Activated B cell treated with CpG ODN at 0.5 μM for 24 hours (primary cell): ENCODE measurements at regions of chr9 and their contacts with region 1.

Region 1: DNA sequence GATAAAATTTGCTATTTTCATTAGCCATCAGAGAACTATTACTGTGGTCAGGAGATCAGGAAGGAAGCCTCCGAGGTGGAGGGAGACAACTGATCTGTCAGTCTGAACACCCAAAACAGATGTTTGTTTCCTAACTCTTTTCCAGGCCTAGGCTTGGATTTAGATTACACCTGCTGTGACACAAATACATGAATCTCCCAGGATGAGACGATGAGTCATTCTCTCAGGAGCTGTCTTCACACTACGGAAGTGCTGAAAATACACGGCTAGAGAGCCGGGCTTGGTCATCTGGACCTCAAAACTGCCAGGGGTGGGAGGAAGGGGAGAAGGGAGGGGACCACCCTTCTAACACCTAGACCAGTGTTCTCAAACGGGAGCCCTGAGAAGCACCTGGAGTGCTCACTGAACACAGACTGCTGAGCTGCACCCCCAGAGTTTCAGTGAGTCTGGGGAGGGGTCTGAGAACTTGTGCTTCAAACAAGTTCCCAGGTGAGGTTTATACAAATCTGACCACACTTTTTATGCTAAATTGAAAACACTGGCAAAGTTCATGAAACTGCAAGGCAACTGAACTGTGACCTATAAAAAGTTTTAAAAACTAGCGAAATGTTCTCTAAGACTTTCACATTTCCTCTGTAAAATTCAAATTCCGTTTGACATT is 80.3 kb upstream of the EQTN start:
- DNase-seq: no peak
- ATAC-seq: peak; percentile 15
- H3K4me3 Mint-ChIP-seq: peak overlapping the region; percentile 68
- H3K27ac Mint-ChIP-seq: peak overlapping the region; percentile 88
- H3K4me1 Mint-ChIP-seq: peaks cover 72% of the 10 kb centered on the region
- H3K27me3 Mint-ChIP-seq: no peaks in the 10 kb centered on the region
- CTCF ChIP-seq: no peak

Region 2: DNA sequence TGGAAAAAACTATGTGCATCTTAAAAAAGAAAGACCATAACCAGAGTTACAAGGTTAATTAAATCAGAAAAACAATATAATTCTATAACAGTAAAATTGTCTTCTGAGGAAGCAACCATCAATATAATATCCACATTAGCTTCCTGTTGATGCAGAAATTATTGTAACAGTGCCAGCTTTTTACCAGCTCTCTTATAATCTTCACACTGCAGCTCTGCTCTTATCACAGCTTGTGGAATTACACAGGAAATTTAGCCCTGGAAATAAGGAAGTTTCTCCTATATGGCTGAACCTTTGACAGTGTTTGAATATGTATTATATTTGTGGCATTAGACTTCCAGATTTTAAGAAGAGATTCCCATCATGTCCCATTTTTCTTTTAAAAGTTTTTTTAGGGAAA is 317.4 kb before region 1 on chr9:
- CTCF ChIA-PET with region 1: no interaction called
- POLR2A ChIA-PET with region 1: no interaction called
- intact Hi-C with region 1: no loop called
- DNase-seq: no peak
- ATAC-seq: no peak
- H3K4me3 Mint-ChIP-seq: no peak overlapping the region
- H3K27ac Mint-ChIP-seq: no peak overlapping the region
- H3K4me1 Mint-ChIP-seq: no peaks in the 10 kb centered on the region
- H3K27me3 Mint-ChIP-seq: no peaks in the 10 kb centered on the region
- CTCF ChIP-seq: no peak

Region 3: GRCh38 chr9:27261517-27262211 is 115.6 kb before region 1 on chr9:
- CTCF ChIA-PET with region 1: no interaction called
- POLR2A ChIA-PET with region 1: no interaction called
- intact Hi-C with region 1: no loop called
- DNase-seq: no peak
- ATAC-seq: no peak
- H3K4me3 Mint-ChIP-seq: no peak overlapping the region
- H3K27ac Mint-ChIP-seq: no peak overlapping the region
- H3K4me1 Mint-ChIP-seq: no peaks in the 10 kb centered on the region
- H3K27me3 Mint-ChIP-seq: no peaks in the 10 kb centered on the region
- CTCF ChIP-seq: no peak

Region 4: GRCh38 chr9:27394154-27394825 is 17.0 kb after region 1 on chr9:
- CTCF ChIA-PET with region 1: no interaction called
- POLR2A ChIA-PET with region 1: interaction called, 3 read pairs
- intact Hi-C with region 1: loop called (anchors 2 kb)
- DNase-seq: no peak
- ATAC-seq: no peak
- H3K4me3 Mint-ChIP-seq: no peak overlapping the region
- H3K27ac Mint-ChIP-seq: peak overlapping the region; percentile 80
- H3K4me1 Mint-ChIP-seq: peaks cover 69% of the 10 kb centered on the region
- H3K27me3 Mint-ChIP-seq: no peaks in the 10 kb centered on the region
- CTCF ChIP-seq: no peak

Region 5: DNA sequence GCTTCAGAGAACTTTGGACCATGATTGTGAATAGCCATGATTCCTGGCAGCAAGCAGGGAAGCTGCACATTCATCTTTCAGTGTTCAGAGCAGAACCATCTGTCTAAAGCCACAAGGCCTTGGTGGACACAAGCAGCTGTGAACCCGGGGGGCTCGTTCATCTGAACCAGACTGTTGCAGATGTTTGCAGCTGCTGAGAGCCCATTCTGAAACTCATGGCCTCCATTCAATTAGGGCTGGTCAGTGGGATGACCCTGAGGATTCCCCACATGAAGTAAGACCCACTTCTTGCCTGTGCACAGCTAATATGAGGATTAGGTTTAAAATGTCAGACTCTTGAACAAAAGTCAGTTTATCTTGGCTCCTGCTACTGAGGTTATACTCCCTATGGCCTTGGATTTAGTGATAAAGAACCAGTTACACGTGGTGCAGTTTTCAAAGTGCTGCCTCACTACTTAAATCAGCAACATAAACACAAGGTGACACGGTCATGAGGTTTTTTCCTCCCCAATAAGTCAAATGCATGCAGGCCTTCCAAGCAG is 37.0 kb after region 1 on chr9:
- CTCF ChIA-PET with region 1: no interaction called
- POLR2A ChIA-PET with region 1: interaction called, 21 read pairs
- intact Hi-C with region 1: loop called (anchors 2 kb)
- DNase-seq: no peak
- ATAC-seq: no peak
- H3K4me3 Mint-ChIP-seq: no peak overlapping the region
- H3K27ac Mint-ChIP-seq: no peak overlapping the region
- H3K4me1 Mint-ChIP-seq: peaks cover 32% of the 10 kb centered on the region
- H3K27me3 Mint-ChIP-seq: no peaks in the 10 kb centered on the region
- CTCF ChIP-seq: no peak

Region 6: DNA sequence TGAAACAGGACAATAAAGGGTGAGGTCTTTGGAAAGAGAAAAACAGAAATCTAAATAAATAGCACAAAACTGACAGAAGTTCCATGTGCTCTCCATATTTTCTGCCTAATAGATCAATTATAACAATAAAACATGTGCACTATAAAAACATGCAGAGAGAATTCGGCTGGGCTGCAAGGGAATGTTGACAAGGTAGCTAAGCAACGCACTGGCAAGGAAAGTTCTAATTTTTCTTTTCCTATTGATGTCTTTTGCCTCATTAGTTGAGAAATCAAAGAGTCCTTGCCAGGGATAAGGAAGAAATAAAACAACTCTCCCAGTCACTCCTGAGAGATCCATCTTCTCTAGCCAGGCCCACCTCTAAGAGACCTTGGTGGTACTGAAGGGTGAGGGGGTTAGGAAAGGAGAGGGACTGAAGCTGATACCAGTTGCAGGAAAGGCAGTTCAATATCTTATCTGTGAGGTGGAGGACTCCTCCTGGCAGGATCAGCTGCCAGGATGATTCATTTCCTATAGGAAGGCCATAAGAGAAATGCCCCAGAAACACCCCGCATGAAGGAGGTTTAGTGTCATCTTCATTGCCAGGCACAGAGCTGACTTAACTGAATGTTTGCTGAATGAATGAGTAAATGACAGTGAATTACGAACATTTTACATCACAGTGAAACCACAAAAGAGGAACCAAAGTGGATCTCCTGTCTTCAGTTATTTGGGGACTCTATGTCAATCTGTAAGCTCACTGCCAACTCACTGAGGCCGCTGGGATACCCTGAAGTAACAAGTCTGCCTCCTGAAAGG is 83.1 kb after region 1 on chr9:
- CTCF ChIA-PET with region 1: no interaction called
- POLR2A ChIA-PET with region 1: interaction called, 3 read pairs
- intact Hi-C with region 1: loop called (anchors 1 kb)
- DNase-seq: no peak
- ATAC-seq: peak; percentile 93
- H3K4me3 Mint-ChIP-seq: peak overlapping the region; percentile 66
- H3K27ac Mint-ChIP-seq: peak overlapping the region; percentile 86
- H3K4me1 Mint-ChIP-seq: peaks cover 61% of the 10 kb centered on the region
- H3K27me3 Mint-ChIP-seq: no peaks in the 10 kb centered on the region
- CTCF ChIP-seq: no peak

Region 7: DNA sequence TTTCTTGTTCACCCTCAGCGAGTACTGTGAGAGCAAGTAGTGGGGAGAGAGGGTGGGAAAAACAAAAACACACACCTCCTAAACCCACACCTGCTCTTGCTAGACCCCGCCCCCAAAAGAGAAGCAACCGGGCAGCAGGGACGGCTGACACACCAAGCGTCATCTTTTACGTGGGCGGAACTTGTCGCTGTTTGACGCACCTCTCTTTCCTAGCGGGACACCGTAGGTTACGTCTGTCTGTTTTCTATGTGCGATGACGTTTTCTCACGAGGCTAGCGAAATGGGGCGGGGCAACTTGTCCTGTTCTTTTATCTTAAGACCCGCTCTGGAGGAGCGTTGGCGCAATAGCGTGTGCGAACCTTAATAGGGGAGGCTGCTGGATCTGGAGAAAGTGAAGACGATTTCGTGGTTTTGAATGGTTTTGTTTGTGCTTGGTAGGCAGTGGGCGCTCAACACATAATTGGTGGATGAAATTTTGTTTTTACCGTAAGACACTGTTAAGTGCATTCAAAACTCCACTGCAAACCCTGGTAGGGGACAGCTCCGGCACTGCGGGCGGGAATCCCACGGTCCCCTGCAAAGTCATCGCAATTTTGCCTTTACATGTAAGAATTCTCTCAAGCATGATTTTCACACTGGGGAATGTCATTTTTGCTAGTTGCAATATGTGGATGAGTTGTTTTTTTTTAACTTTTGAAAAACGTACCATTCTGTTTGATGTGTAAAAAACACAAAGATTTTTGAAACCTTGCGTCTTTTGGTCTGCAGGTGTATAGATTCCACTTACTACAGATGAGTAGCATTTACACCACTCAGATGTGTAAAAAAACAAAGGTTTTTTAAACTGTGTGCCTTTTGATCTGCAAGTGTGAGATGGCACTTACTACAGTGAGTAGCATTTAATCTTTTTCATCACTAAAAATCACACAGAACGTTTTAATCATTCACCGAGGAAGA is 196.6 kb after region 1 on chr9:
- CTCF ChIA-PET with region 1: no interaction called
- POLR2A ChIA-PET with region 1: interaction called, 3 read pairs
- intact Hi-C with region 1: loop called (anchors 1 kb)
- DNase-seq: peak; percentile 77
- ATAC-seq: peak; percentile 88
- H3K4me3 Mint-ChIP-seq: peak overlapping the region; percentile 97
- H3K27ac Mint-ChIP-seq: peak overlapping the region; percentile 99
- H3K4me1 Mint-ChIP-seq: peaks cover 24% of the 10 kb centered on the region
- H3K27me3 Mint-ChIP-seq: no peaks in the 10 kb centered on the region
- CTCF ChIP-seq: no peak